ENCODE measurements at regions of chr20 and their contacts with region 1.

Region 1: DNA sequence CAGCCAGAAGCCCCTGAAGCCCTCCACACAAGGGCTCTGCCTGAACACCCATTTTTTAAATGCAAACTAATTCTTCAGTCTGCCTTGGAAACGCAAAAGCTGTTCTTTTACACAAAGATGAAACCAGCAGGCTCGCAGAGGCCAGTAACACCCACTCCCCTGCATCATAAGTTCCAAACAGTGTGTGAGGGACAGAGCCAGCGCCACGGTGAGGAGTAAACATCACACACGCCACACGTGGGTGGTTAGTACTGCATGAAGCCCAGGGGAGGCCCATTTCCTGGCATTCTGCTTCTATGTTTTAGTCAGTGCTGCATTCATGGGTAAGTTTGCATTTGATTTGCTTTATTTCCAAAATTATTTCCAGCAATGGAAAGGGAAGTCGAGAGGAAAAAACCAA is 217.7 kb upstream of the RIN2 start:
- DNase-seq: no peak
- H3K4me3 ChIP-seq: no peak overlapping the region
- H3K27ac ChIP-seq: no peak overlapping the region
- H3K4me1 ChIP-seq: no peaks in the 10 kb centered on the region
- H3K27me3 ChIP-seq: no peaks in the 10 kb centered on the region
- CTCF ChIP-seq: no peak
- POLR2A ChIP-seq: no peak

Region 2: DNA sequence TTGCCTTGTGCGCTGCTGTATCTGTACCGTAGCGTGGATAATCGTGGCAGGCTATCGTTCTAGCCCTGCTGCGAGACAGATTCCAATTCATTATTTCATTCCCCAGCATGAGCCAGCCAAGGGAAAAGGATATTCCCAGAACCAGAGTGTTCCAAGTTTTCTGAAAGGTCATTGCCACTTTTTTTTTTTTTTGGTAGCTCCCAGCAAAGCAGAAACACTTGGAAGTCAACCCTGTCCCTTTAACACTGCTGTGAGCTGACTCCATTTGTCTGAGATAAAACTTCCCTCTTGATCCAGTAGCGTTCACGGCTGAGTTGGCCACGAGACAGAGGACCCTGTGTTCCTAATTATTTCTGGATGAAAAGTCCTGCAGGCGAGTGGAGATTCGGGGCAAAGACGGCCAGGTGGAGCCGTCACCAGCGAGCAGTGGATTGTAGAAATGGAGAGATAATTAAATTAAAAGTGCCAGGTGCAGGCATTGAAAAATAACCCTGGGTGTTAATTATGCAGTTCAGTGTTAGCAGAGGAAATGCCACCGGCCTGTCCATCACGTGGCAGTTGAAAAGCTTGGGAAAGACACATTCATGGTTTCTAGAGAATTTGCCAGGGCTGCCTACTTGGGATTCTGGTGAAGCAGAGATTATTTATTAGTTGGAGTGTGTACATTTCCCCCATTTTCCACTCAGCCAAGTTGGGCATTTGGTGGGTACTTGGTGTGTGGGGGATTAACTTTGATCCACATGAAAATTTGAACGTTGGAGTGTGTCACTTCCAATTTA is 163.8 kb before region 1 on chr20:
- intact Hi-C with region 1: loop called (anchors 5 kb)
- DNase-seq: peak in 1 of 2 donors; percentile 62
- H3K4me3 ChIP-seq: no peak overlapping the region
- H3K27ac ChIP-seq: no peak overlapping the region
- H3K4me1 ChIP-seq: no peaks in the 10 kb centered on the region
- H3K27me3 ChIP-seq: no peaks in the 10 kb centered on the region
- CTCF ChIP-seq: no peak
- POLR2A ChIP-seq: no peak

Region 3: DNA sequence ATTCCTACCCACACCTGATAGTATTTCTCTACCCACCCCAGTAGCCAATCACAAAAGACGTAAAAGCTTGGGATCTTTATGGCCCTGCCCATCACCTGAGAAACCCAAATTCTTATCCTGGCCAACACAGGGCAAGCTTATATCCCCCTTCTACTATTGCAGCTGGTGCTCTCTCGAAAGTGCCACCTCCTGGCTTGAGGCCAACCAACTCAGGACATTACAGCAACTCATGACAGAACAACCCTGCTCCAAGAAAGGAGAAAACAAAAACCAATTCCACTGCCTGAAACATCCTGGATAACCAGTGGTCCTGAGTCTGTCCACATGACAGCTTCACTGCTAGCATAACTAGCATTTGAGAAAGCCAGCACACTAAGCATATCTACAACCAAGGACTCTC is 609.8 kb after region 1 on chr20:
- intact Hi-C with region 1: loop called (anchors 10 kb)
- DNase-seq: no peak
- H3K4me3 ChIP-seq: no peak overlapping the region
- H3K27ac ChIP-seq: no peak overlapping the region
- H3K4me1 ChIP-seq: no peaks in the 10 kb centered on the region
- H3K27me3 ChIP-seq: no peaks in the 10 kb centered on the region
- CTCF ChIP-seq: no peak
- POLR2A ChIP-seq: no peak

Measured in vagina (tissue), 2 donors.